ENCODE measurements at regions of chr6 and their contacts with region 1.

Region 1: GRCh38 chr6:116268589-116269293 is 11.0 kb downstream of the TSPYL1 start:
- DNase-seq: peak; percentile 82
- H3K4me3 Mint-ChIP-seq: no peak overlapping the region
- H3K27ac Mint-ChIP-seq: peak overlapping the region; percentile 49
- H3K4me1 Mint-ChIP-seq: peaks cover 17% of the 10 kb centered on the region
- H3K27me3 Mint-ChIP-seq: no peaks in the 10 kb centered on the region
- CTCF ChIP-seq: peak; percentile 80

Region 2: DNA sequence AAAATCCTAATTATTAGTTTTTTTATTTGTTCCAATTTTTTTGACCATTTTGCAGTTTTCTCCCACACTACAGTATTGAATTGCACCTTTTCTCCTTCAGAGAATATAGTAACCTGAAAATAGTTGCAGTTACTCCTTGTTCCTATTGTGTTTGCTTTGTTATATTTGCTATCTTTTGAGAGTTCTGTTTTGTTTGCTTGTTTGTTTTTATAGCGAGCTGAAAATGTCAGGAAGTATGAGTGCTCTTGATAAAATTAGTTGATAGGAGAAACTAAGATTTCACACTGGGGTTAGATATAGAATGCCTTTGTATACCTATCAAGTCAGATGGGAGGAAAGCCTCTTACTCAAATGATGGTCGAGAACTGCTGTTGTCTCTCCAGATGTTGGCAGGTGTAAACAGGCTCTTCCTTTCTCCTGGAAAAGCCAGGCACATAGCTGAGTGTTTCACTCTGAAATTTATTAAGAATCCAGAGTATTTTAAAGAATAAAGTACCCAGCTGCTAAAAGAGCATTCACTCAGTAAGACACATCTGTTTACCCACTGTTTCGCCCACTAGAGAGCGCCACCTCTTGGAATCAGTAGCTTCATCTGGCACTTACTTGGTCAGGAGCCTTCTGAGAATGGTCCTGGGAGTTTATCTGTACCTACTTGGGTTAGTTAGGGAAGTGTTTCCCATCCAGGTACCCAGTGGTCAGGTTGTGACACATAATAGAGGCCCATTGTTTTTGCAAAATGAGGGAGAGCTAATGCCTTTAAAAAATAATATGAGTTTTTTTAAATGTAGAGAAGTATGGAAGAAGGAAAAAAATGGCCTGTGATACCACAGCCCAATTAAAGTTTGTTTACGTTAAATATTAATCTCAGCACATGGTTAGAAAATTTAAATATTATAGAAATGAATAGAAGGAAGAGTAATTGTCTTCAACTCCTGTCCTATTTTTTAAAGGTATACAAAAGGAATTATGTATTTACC is 156.9 kb before region 1 on chr6:
- CTCF ChIA-PET with region 1: interaction called, 5 read pairs
- POLR2A ChIA-PET with region 1: no interaction called
- intact Hi-C with region 1: loop called (anchors 5 kb)
- DNase-seq: peak; percentile 63
- H3K4me3 Mint-ChIP-seq: no peak overlapping the region
- H3K27ac Mint-ChIP-seq: no peak overlapping the region
- H3K4me1 Mint-ChIP-seq: no peaks in the 10 kb centered on the region
- H3K27me3 Mint-ChIP-seq: no peaks in the 10 kb centered on the region
- CTCF ChIP-seq: peak; percentile 48

Region 3: DNA sequence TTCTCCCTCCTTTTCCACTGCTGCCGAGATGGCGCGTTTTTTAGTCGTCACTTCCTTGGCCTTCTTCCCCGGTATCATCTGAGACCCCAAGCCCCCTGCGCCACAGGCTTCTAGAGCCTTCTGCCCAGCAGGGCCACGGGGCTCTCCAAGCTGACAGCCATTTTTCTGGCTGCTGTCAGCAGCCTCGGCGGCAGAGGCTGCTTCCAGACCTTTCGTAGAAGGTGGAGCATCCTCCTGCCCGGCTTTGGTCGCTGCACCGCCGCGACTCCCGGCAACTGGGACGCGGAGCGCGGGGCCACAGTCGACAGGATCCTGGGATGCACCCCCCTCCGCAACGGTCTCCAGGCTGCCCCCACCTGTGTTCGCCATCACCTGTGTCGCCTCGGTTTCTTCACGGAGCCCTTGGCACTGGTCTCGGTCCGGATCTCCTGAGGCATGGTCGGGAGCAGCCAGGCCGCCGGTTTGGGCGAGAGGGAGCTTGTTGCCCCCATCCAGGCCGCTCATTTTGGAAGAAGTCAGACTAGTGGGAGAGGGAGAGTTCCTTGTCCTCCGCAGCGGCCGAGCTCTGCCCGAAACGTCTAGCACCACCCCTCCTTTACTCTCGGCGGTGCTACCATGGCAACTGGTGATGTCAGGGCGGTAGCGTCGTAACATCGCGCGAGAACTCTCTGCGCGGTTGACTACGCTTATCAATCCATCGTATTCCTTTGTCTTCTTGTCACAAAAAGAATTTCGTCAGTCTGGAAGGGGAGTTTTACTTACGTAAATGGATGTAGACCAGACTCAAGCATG is 15.0 kb before region 1 on chr6 and contains the start of gene TSPYL4:
- CTCF ChIA-PET with region 1: interaction called, 34 read pairs
- POLR2A ChIA-PET with region 1: interaction called, 16 read pairs
- intact Hi-C with region 1: no loop called
- DNase-seq: peak; percentile 96
- H3K4me3 Mint-ChIP-seq: no peak within 1 kb of the TSS
- H3K27ac Mint-ChIP-seq: no peak within 1 kb of the TSS
- H3K4me1 Mint-ChIP-seq: peaks cover 22% of the 10 kb centered on the region
- H3K27me3 Mint-ChIP-seq: no peaks in the 10 kb centered on the region
- CTCF ChIP-seq: no peak
- total RNA-seq, gene TSPYL4: 9.1 and 9.8 TPM in 2 replicates

Region 4: GRCh38 chr6:116405138-116405537 is 136.4 kb after region 1 on chr6:
- CTCF ChIA-PET with region 1: interaction called, 13 read pairs
- POLR2A ChIA-PET with region 1: interaction called, 3 read pairs
- intact Hi-C with region 1: no loop called
- DNase-seq: no peak
- H3K4me3 Mint-ChIP-seq: no peak overlapping the region
- H3K27ac Mint-ChIP-seq: no peak overlapping the region
- H3K4me1 Mint-ChIP-seq: peaks cover 21% of the 10 kb centered on the region
- H3K27me3 Mint-ChIP-seq: no peaks in the 10 kb centered on the region
- CTCF ChIP-seq: no peak

Region 5: DNA sequence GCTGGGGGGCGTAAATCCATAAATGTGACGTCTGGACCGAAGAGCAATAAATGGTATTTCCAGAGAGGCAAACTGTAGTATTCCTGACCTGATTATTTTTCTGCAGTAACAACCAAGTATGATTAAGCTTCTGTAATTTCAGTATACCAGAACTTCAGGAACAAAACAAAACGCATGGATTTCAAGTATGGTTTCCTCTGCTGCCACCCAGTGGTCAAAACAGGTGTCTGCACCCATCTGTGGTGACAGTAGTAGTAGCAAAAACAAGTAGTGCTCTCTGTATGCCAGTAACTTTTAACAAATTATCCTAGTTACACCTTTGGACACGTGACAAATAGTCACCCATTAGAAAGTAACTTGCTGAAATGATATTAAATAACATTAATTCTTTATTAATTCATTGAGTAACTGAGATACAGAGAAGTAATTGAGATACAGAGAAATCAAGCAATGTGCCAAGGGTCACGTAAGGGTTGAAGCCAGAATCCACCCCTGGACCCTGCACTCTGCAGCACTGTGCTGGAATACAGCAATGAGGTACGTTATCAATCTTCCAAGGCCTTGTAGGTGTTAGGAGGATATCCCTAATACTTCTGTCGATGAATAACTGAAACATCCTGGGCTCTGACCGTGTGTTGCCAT is 292.8 kb after region 1 on chr6:
- CTCF ChIA-PET with region 1: interaction called, 155 read pairs
- POLR2A ChIA-PET with region 1: interaction called, 5 read pairs
- intact Hi-C with region 1: loop called (anchors 1 kb)
- DNase-seq: peak; percentile 75
- H3K4me3 Mint-ChIP-seq: no peak overlapping the region
- H3K27ac Mint-ChIP-seq: no peak overlapping the region
- H3K4me1 Mint-ChIP-seq: peaks cover 6% of the 10 kb centered on the region
- H3K27me3 Mint-ChIP-seq: no peaks in the 10 kb centered on the region
- CTCF ChIP-seq: peak; percentile 81

Region 6: GRCh38 chr6:116648156-116648555 is 379.4 kb after region 1 on chr6:
- CTCF ChIA-PET with region 1: interaction called, 6 read pairs
- POLR2A ChIA-PET with region 1: no interaction called
- intact Hi-C with region 1: loop called (anchors 5 kb)
- DNase-seq: no peak
- H3K4me3 Mint-ChIP-seq: no peak overlapping the region
- H3K27ac Mint-ChIP-seq: no peak overlapping the region
- H3K4me1 Mint-ChIP-seq: peaks cover 6% of the 10 kb centered on the region
- H3K27me3 Mint-ChIP-seq: no peaks in the 10 kb centered on the region
- CTCF ChIP-seq: no peak